Natural killer cell (primary cell): ENCODE measurements at regions of chr4 and their contacts with region 1.

Region 1: GRCh38 chr4:158873795-158874401 is 105.1 kb downstream of the FNIP2 start:
- DNase-seq: peak in 1 of 2 donors; percentile 24
- ATAC-seq: peak; percentile 65 to 81 (median 68)
- H3K4me3 ChIP-seq: no peak overlapping the region
- H3K4me3 Mint-ChIP-seq: peak overlapping the region; percentile 58
- H3K27ac ChIP-seq: no peak overlapping the region
- H3K27ac Mint-ChIP-seq: peak overlapping the region; percentile 70 to 72
- H3K4me1 ChIP-seq: peaks cover 8% of the 10 kb centered on the region
- H3K4me1 Mint-ChIP-seq: peaks cover 34 to 47% of the 10 kb centered on the region in 2 donors
- H3K27me3 ChIP-seq: no peaks in the 10 kb centered on the region
- H3K27me3 Mint-ChIP-seq: peaks cover 0 to 6% of the 10 kb centered on the region in 2 donors
- CTCF ChIP-seq: no peak

Region 2: GRCh38 chr4:158845311-158846041 is 28.4 kb before region 1 on chr4:
- intact Hi-C with region 1: no loop called
- DNase-seq: no peak
- ATAC-seq: no peak
- H3K4me3 ChIP-seq: no peak overlapping the region
- H3K4me3 Mint-ChIP-seq: no peak overlapping the region
- H3K27ac ChIP-seq: no peak overlapping the region
- H3K27ac Mint-ChIP-seq: no peak overlapping the region
- H3K4me1 ChIP-seq: no peaks in the 10 kb centered on the region
- H3K4me1 Mint-ChIP-seq: peaks cover 15 to 16% of the 10 kb centered on the region in 2 donors
- H3K27me3 ChIP-seq: no peaks in the 10 kb centered on the region
- H3K27me3 Mint-ChIP-seq: no peaks in the 10 kb centered on the region
- CTCF ChIP-seq: no peak

Region 3: GRCh38 chr4:158906073-158906472 is 32.2 kb after region 1 on chr4:
- intact Hi-C with region 1: loop called (anchors 5 kb)
- DNase-seq: peak in 1 of 2 donors; percentile 52
- ATAC-seq: peak; percentile 76 to 79 (median 78)
- H3K4me3 ChIP-seq: no peak overlapping the region
- H3K4me3 Mint-ChIP-seq: no peak overlapping the region
- H3K27ac ChIP-seq: no peak overlapping the region
- H3K27ac Mint-ChIP-seq: peak overlapping the region; percentile 50 to 64
- H3K4me1 ChIP-seq: peaks cover 11% of the 10 kb centered on the region
- H3K4me1 Mint-ChIP-seq: peaks cover 13 to 33% of the 10 kb centered on the region in 2 donors
- H3K27me3 ChIP-seq: no peaks in the 10 kb centered on the region
- H3K27me3 Mint-ChIP-seq: no peaks in the 10 kb centered on the region
- CTCF ChIP-seq: no peak